CD4-positive, alpha-beta T cell (primary cell): ENCODE measurements at regions of chr13 and their contacts with region 1.

Region 1: GRCh38 chr13:77329133-77329910 is 2.4 kb upstream of the MYCBP2 start:
- DNase-seq: peak; percentile 73 to 98 (median 86)
- ATAC-seq: peak; percentile 64
- H3K4me3 ChIP-seq: peak overlapping the region; percentile 77
- H3K4me3 Mint-ChIP-seq: peak overlapping the region; percentile 93
- H3K27ac ChIP-seq: peak overlapping the region; percentile 59 to 86
- H3K27ac Mint-ChIP-seq: peak overlapping the region; percentile 91
- H3K4me1 ChIP-seq: peaks cover 11% of the 10 kb centered on the region
- H3K4me1 Mint-ChIP-seq: peaks cover 65% of the 10 kb centered on the region
- H3K27me3 ChIP-seq: no peaks in the 10 kb centered on the region
- H3K27me3 Mint-ChIP-seq: no peaks in the 10 kb centered on the region
- CTCF ChIP-seq: no peak

Region 2: GRCh38 chr13:75549262-75550158 is 1779.8 kb before region 1 on chr13 and contains the start of gene UCHL3:
- CTCF ChIA-PET with region 1: no interaction called
- POLR2A ChIA-PET with region 1: no interaction called
- intact Hi-C with region 1: loop called in 1 of 2 experiments (anchors 10 kb)
- DNase-seq: peak; percentile 95 to 99 (median 97)
- ATAC-seq: peak; percentile 93
- H3K4me3 ChIP-seq: peak within 1 kb of the TSS; percentile 93
- H3K4me3 Mint-ChIP-seq: peak within 1 kb of the TSS; percentile 97
- H3K27ac ChIP-seq: peak within 1 kb of the TSS; percentile 76 to 91
- H3K27ac Mint-ChIP-seq: peak within 1 kb of the TSS; percentile 89
- H3K4me1 ChIP-seq: peaks cover 18% of the 10 kb centered on the region
- H3K4me1 Mint-ChIP-seq: peaks cover 47% of the 10 kb centered on the region
- H3K27me3 ChIP-seq: no peaks in the 10 kb centered on the region
- H3K27me3 Mint-ChIP-seq: no peaks in the 10 kb centered on the region
- CTCF ChIP-seq: peak; percentile 96
- total RNA-seq, gene UCHL3: 16.0 to 17.7 TPM

Region 3: DNA sequence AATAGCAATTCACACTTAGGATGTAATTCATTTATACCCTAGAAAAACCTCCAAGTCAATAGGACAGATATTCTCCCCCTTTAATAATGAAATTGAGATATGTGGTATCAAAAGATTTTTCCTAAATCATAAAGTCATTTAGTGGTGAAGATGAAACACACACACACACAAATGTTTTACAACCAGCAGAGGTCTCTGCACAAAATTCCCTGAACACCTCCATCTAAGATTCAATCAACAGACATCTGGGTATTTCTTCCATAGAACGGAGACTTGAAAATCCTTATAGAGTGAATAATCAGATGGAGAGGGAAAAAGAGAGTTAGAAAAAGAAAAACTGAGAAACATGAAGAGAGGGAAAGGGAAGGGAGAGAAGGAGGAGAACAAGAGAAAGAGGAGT is 55.2 kb before region 1 on chr13:
- CTCF ChIA-PET with region 1: no interaction called
- POLR2A ChIA-PET with region 1: interaction called, 11 read pairs
- intact Hi-C with region 1: loop called in 1 of 2 experiments (anchors 5 kb)
- DNase-seq: peak in 1 of 14 experiments; percentile 9
- ATAC-seq: no peak
- H3K4me3 ChIP-seq: no peak overlapping the region
- H3K4me3 Mint-ChIP-seq: no peak overlapping the region
- H3K27ac ChIP-seq: no peak overlapping the region
- H3K27ac Mint-ChIP-seq: peak overlapping the region; percentile 19
- H3K4me1 ChIP-seq: no peaks in the 10 kb centered on the region
- H3K4me1 Mint-ChIP-seq: peaks cover 24% of the 10 kb centered on the region
- H3K27me3 ChIP-seq: no peaks in the 10 kb centered on the region
- H3K27me3 Mint-ChIP-seq: no peaks in the 10 kb centered on the region
- CTCF ChIP-seq: peak; percentile 18

Region 4: GRCh38 chr13:77309254-77309653 is 20.1 kb before region 1 on chr13:
- CTCF ChIA-PET with region 1: no interaction called
- POLR2A ChIA-PET with region 1: interaction called, 6 read pairs
- intact Hi-C with region 1: loop called in 1 of 2 experiments (anchors 1 kb)
- DNase-seq: no peak
- ATAC-seq: peak; percentile 65
- H3K4me3 ChIP-seq: no peak overlapping the region
- H3K4me3 Mint-ChIP-seq: peak overlapping the region; percentile 54
- H3K27ac ChIP-seq: no peak overlapping the region
- H3K27ac Mint-ChIP-seq: peak overlapping the region; percentile 34
- H3K4me1 ChIP-seq: peaks cover 13% of the 10 kb centered on the region
- H3K4me1 Mint-ChIP-seq: peaks cover 93% of the 10 kb centered on the region
- H3K27me3 ChIP-seq: no peaks in the 10 kb centered on the region
- H3K27me3 Mint-ChIP-seq: no peaks in the 10 kb centered on the region
- CTCF ChIP-seq: no peak

Region 5: DNA sequence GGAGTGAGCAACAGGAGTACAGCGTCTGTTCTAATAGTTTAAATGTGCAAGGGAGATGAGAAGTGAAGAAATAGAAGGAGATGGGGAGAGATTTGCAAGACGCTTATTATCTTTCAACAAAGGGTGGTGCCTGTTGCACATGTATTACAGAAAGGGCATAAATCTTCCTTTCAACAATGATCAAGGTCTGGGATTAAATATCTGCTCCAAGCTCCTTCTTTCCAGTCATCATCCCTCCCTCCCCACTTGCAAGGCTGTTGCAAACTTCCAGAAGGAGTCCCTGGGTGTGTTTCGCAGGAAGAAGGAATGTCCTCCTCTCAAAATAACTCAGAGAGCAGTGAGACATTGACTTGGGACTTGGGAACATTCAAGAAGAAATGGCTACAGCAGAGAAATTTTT is 61.1 kb after region 1 on chr13:
- CTCF ChIA-PET with region 1: no interaction called
- POLR2A ChIA-PET with region 1: interaction called, 4 read pairs
- intact Hi-C with region 1: loop called in 1 of 2 experiments (anchors 5 kb)
- DNase-seq: no peak
- ATAC-seq: no peak
- H3K4me3 ChIP-seq: no peak overlapping the region
- H3K4me3 Mint-ChIP-seq: no peak overlapping the region
- H3K27ac ChIP-seq: no peak overlapping the region
- H3K27ac Mint-ChIP-seq: no peak overlapping the region
- H3K4me1 ChIP-seq: no peaks in the 10 kb centered on the region
- H3K4me1 Mint-ChIP-seq: peaks cover 28% of the 10 kb centered on the region
- H3K27me3 ChIP-seq: no peaks in the 10 kb centered on the region
- H3K27me3 Mint-ChIP-seq: no peaks in the 10 kb centered on the region
- CTCF ChIP-seq: no peak

Region 6: GRCh38 chr13:77697217-77698103 is 368.1 kb after region 1 on chr13 and contains the start of gene SLAIN1:
- CTCF ChIA-PET with region 1: no interaction called
- POLR2A ChIA-PET with region 1: interaction called, 53 read pairs
- intact Hi-C with region 1: loop called (anchors 2 to 5 kb)
- DNase-seq: peak; percentile 69 to 93 (median 82)
- ATAC-seq: peak; percentile 75
- H3K4me3 ChIP-seq: peak within 1 kb of the TSS; percentile 78
- H3K4me3 Mint-ChIP-seq: peak within 1 kb of the TSS; percentile 100
- H3K27ac ChIP-seq: peak within 1 kb of the TSS; percentile 71 to 72
- H3K27ac Mint-ChIP-seq: peak within 1 kb of the TSS; percentile 82
- H3K4me1 ChIP-seq: peaks cover 15% of the 10 kb centered on the region
- H3K4me1 Mint-ChIP-seq: peaks cover 50% of the 10 kb centered on the region
- H3K27me3 ChIP-seq: no peaks in the 10 kb centered on the region
- H3K27me3 Mint-ChIP-seq: no peaks in the 10 kb centered on the region
- CTCF ChIP-seq: no peak
- total RNA-seq, gene SLAIN1: 41.2 to 42.5 TPM